H1 (cell line): ENCODE measurements at regions of chr3 and their contacts with region 1.

Region 1: DNA sequence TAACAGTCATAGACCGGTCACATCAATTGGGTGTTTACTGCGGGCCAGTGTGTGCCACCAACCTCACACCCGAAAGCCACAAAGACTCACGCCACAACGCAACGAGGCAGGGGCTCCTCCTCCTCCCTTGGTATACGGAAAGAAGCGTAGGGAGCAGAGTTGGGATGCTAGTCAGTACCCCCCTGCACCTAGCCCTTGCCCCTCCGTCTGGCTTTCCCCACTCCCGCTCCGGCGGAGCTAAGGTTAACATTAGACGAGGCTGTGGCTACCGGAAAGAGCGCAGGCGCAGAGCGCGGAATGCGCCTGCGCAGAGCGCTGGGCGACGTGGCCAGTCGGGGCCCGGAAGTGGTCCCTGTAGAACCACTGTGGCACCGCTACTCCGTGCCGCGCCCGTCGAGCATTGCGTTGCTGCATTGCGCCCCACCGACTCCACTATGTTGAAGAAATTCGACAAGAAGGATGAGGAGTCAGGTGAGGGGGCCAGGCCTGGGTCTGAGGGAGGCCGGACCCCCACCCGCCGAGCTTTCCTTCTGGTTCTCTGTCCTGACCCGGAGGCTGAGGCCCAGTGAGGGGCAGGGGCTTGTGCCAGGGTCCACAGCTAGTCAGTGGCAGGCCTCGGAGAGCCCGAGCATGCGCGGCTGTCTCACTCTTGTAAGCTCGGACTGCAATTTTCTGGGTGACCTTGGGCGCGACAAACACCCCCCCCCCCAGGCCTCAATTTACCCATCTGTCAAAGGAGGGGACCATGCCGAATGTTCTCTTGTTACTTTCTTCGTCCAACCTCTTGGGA is at the start of gene COPG1:
- DNase-seq: peak; percentile 73 to 90
- H3K4me3 ChIP-seq: peak within 1 kb of the TSS; percentile 75 to 93 (median 87)
- H3K27ac ChIP-seq: peak within 1 kb of the TSS; percentile 66
- H3K4me1 ChIP-seq: peaks cover 0 to 6% (median 1%) of the 10 kb centered on the region in 4 experiments; a peak in 4 of 7 replicates
- H3K27me3 ChIP-seq: no peaks in the 10 kb centered on the region
- CTCF ChIP-seq: peak in 1 of 3 experiments; percentile 7; a peak in 1 of 4 replicates
- EP300 ChIP-seq: no peak
- POLR2A ChIP-seq: peak; percentile 82 to 94
- RAD21 ChIP-seq: no peak
- total RNA-seq, gene COPG1: 104 and 106 TPM in 2 replicates

Region 2: GRCh38 chr3:129052675-129053074 is 196.8 kb before region 1 on chr3:
- CTCF ChIA-PET with region 1: interaction called, 16 read pairs
- POLR2A ChIA-PET with region 1: no interaction called
- DNase-seq: no peak
- H3K4me3 ChIP-seq: no peak overlapping the region
- H3K27ac ChIP-seq: no peak overlapping the region
- H3K4me1 ChIP-seq: no peaks in the 10 kb centered on the region
- H3K27me3 ChIP-seq: no peaks in the 10 kb centered on the region
- CTCF ChIP-seq: no peak
- EP300 ChIP-seq: no peak
- POLR2A ChIP-seq: no peak
- RAD21 ChIP-seq: no peak

Region 3: DNA sequence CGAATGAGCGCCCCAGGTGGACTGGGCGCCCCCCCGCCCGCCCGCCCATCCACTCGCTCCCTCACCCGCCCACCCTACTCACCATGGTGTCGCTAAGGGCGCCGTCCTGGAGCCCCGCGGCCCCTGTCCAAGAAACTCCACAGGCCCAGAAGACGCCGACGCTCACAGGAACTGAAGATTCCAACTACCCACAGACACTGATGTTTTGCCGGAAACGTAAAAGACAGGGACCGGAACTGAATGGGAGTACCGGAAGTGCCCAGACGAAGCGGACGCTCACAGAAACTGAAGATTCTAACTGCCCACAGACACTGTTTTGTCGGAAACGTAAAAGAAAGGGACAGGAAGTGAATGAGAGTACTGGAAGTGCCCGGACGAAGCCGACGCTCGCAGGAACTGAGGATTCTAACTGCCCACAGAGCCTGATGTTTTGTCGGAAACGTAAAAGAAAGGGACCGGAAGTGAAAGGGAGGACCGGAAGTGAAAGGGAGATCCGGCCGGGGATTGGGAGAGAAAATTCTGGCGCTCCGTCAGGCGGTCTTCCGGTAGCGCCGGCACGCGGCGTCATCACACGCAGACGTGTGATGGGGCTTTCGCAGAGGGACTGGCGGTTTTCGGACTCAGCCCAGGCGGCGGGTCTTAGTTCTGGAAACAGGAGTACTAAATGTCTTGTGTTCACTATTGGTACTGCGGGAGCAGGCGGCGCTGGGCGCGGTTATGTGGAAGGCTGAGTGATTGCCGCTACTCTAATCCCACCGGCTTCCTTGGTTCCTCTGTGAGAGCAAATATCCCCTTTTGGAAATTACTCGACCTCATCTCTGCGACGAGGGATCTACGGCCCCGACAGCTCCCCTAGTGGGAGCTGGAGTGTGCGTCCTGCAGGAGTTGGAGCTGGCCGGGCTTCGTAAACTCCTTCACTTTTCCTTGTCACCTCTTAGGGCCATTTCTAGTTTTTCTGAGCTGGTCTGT is 88.3 kb before region 1 on chr3 and contains the start of gene ISY1:
- CTCF ChIA-PET with region 1: interaction called, 38 read pairs
- POLR2A ChIA-PET with region 1: interaction called, 22 read pairs
- DNase-seq: peak; percentile 67 to 86
- H3K4me3 ChIP-seq: peak within 1 kb of the TSS; percentile 59 to 96 (median 94)
- H3K27ac ChIP-seq: peak within 1 kb of the TSS; percentile 100
- H3K4me1 ChIP-seq: peaks cover 0 to 3% (median 1%) of the 10 kb centered on the region in 4 experiments; a peak in 4 of 7 replicates
- H3K27me3 ChIP-seq: no peaks in the 10 kb centered on the region
- CTCF ChIP-seq: peak; percentile 76 to 86 (median 84)
- EP300 ChIP-seq: no peak
- POLR2A ChIP-seq: peak; percentile 93 to 97
- RAD21 ChIP-seq: peak; percentile 11 to 43; a peak in 2 of 4 replicates
- total RNA-seq, gene ISY1: 16.6 and 21.8 TPM in 2 replicates

Region 4: DNA sequence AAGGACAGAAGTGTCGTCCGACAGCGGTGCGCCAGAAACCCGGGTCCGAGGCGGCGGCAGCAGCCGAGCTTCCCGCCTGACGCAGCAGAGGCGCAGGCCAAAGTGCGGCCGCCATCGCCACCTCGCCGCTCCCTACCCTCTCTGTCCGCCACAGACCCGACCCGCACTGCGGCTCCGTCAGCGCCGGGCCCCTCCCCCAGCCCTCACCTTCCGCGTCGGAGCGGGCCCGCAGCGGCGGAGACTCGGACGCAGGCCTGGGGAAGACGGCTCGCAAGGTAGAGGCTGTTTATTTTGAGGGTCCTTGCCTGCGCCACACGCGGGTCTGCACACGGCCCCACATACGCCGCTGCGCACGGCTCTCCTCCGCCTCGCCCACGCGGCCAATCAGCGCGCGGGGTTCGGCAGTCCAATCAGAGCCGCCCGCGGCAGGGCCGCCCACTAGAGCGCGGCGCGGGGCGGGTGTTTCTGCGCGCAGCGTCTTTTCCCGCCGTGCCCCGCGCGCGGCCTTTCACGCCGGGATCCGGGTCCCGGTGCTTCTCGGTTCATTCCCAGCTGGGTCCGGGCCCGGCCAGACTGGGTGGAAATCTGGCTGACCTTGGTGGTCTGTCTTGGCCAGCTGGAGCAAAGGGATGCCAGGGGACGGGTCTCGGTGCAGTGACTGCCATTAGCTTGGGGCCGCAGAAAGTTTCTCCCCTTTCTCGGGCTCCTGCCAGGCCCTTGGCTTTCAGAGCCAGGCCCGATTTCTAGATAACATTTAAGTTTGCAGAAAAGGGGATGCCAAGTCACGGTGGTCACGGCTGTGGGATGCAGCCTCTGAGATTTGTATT is 65.7 kb before region 1 on chr3 and contains the start of gene CNBP:
- CTCF ChIA-PET with region 1: interaction called, 45 read pairs
- POLR2A ChIA-PET with region 1: interaction called, 39 read pairs
- DNase-seq: peak in 1 of 2 experiments; percentile 91
- H3K4me3 ChIP-seq: peak within 1 kb of the TSS; percentile 77 to 100 (median 98)
- H3K27ac ChIP-seq: peak within 1 kb of the TSS; percentile 99
- H3K4me1 ChIP-seq: peaks cover 0 to 4% (median 0%) of the 10 kb centered on the region in 4 experiments; a peak in 1 of 7 replicates
- H3K27me3 ChIP-seq: no peaks in the 10 kb centered on the region
- CTCF ChIP-seq: no peak; a peak in 1 of 4 replicates
- EP300 ChIP-seq: no peak
- POLR2A ChIP-seq: peak in 1 of 2 experiments; percentile 91; a peak in 2 of 3 replicates
- RAD21 ChIP-seq: no peak
- total RNA-seq, gene CNBP: 351 and 371 TPM in 2 replicates

Region 5: DNA sequence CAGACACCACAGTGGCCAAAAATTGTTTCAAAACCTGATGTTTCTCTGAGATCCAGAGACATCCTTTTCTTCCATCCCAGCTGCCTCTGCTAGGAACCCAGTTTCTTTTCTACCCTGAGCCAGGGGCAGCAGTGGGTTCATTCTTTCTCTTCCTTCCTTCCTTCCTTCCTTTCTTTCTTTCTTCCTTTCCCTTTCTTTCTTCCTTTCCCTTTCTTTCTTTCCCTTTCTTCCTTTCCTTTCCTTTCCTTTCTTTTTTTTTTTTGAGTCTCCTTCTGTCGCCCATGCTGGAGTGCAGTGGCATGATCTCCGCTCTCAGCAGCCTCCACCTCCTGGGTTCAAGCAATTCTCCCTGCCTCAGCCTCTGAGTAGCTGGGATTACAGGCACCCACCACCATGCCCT is 30.7 kb before region 1 on chr3:
- CTCF ChIA-PET with region 1: interaction called, 31 read pairs
- POLR2A ChIA-PET with region 1: no interaction called
- DNase-seq: no peak
- H3K4me3 ChIP-seq: no peak overlapping the region
- H3K27ac ChIP-seq: no peak overlapping the region
- H3K4me1 ChIP-seq: no peaks in the 10 kb centered on the region
- H3K27me3 ChIP-seq: no peaks in the 10 kb centered on the region
- CTCF ChIP-seq: no peak
- EP300 ChIP-seq: no peak
- POLR2A ChIP-seq: no peak
- RAD21 ChIP-seq: no peak

Region 6: GRCh38 chr3:129263161-129264070 is 13.9 kb after region 1 on chr3:
- CTCF ChIA-PET with region 1: interaction called, 15 read pairs
- POLR2A ChIA-PET with region 1: interaction called, 15 read pairs
- DNase-seq: no peak
- H3K4me3 ChIP-seq: no peak overlapping the region
- H3K27ac ChIP-seq: no peak overlapping the region
- H3K4me1 ChIP-seq: no peaks in the 10 kb centered on the region
- H3K27me3 ChIP-seq: no peaks in the 10 kb centered on the region
- CTCF ChIP-seq: no peak
- EP300 ChIP-seq: no peak
- POLR2A ChIP-seq: no peak
- RAD21 ChIP-seq: no peak

Region 7: GRCh38 chr3:129867506-129868124 is 618.1 kb after region 1 on chr3:
- CTCF ChIA-PET with region 1: no interaction called
- POLR2A ChIA-PET with region 1: no interaction called
- DNase-seq: no peak
- H3K4me3 ChIP-seq: no peak overlapping the region
- H3K27ac ChIP-seq: no peak overlapping the region
- H3K4me1 ChIP-seq: peaks cover 0 to 9% (median 2%) of the 10 kb centered on the region in 4 experiments; a peak in 2 of 7 replicates
- H3K27me3 ChIP-seq: no peaks in the 10 kb centered on the region
- CTCF ChIP-seq: no peak
- EP300 ChIP-seq: no peak
- POLR2A ChIP-seq: no peak
- RAD21 ChIP-seq: no peak